Activated B cell treated with CpG ODN at 0.5 μM for 24 hours (primary cell): ENCODE measurements at regions of chr12 and their contacts with region 1.

Region 1: DNA sequence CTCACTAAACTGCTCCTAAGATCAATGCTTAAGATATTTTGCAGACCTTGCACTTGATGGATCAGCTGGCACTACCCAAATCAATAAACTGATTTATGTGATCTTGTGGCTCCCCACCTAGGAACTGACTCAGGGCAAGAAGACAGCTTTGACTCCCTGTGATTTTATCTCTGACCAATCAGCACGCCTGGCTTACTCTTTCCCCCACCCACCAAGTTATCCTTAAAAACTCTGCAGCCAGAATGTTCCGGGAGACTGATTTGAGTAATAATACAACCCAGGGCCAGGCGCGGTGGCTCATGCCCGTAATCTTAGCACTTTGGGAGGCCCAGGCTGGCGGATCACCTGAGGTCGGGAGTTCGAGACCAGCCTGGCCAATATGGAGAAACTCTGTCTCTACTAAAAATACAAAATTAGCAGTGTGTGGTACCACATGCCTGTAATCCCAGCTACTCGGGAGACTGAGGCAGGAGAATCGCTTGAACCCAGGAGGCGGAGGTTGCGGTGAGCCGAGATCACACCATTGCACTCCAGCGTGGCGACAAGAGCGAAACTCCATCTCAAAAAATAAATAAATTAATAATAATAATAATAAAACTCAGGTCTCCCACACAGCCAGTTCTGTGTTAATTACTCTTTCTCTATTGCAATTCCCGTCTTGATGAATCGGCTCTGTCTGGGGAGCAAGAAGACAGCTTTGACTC is 12.0 kb downstream of the MORN3 start:
- DNase-seq: no peak
- ATAC-seq: no peak
- H3K4me3 Mint-ChIP-seq: no peak overlapping the region
- H3K27ac Mint-ChIP-seq: peak overlapping the region; percentile 50
- H3K4me1 Mint-ChIP-seq: peaks cover 22% of the 10 kb centered on the region
- H3K27me3 Mint-ChIP-seq: no peaks in the 10 kb centered on the region
- CTCF ChIP-seq: no peak

Region 2: GRCh38 chr12:121637231-121637914 is 20.1 kb before region 1 on chr12:
- CTCF ChIA-PET with region 1: interaction called, 3 read pairs
- POLR2A ChIA-PET with region 1: interaction called, 3 read pairs
- intact Hi-C with region 1: loop called (anchors 2 kb)
- DNase-seq: peak; percentile 52
- ATAC-seq: peak; percentile 88
- H3K4me3 Mint-ChIP-seq: peak overlapping the region; percentile 53
- H3K27ac Mint-ChIP-seq: peak overlapping the region; percentile 84
- H3K4me1 Mint-ChIP-seq: peaks cover 50% of the 10 kb centered on the region
- H3K27me3 Mint-ChIP-seq: no peaks in the 10 kb centered on the region
- CTCF ChIP-seq: no peak

Region 3: DNA sequence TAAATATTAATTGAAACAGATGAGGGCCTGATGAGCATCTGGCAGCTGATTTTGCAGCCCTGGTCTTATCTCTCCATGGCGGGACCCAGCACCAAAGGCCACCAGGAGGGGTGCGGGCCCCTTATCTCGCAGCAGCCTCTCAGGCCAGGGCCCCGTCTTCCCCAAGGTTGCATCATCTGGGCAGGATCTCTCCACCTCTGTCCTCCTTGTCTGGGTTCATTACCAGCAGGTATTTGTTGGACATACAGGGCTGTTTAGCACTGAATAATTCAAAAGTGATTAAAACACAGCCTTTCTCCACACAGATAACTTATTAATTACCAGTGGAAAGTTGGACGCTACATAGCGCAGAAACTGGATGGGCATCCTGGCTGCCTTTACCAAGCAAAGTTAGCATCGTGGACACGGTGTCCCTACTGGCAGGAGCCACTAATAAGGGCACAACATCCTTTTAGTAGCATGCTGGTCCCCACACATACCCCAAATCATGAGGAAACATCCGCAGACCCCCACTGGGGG is 80.9 kb after region 1 on chr12:
- CTCF ChIA-PET with region 1: no interaction called
- POLR2A ChIA-PET with region 1: no interaction called
- intact Hi-C with region 1: no loop called
- DNase-seq: no peak
- ATAC-seq: no peak
- H3K4me3 Mint-ChIP-seq: no peak overlapping the region
- H3K27ac Mint-ChIP-seq: no peak overlapping the region
- H3K4me1 Mint-ChIP-seq: no peaks in the 10 kb centered on the region
- H3K27me3 Mint-ChIP-seq: no peaks in the 10 kb centered on the region
- CTCF ChIP-seq: no peak